ENCODE measurements at regions of chr6 and their contacts with region 1.

Region 1: GRCh38 chr6:3162565-3163247 is 5.4 kb upstream of the TUBB2A start:
- DNase-seq: peak; percentile 92 to 99 (median 98)
- ATAC-seq: peak; percentile 79
- H3K4me3 ChIP-seq: peak overlapping the region; percentile 69
- H3K27ac ChIP-seq: peak overlapping the region; percentile 98
- H3K4me1 ChIP-seq: peaks cover 33 to 76% of the 10 kb centered on the region in 2 experiments
- H3K27me3 ChIP-seq: no peaks in the 10 kb centered on the region
- CTCF ChIP-seq: peak; percentile 21 to 38 (median 22); a peak in 4 of 6 replicates
- EP300 ChIP-seq: no peak; the same call in 1 of the 2 replicates
- POLR2A ChIP-seq: peak; percentile 93
- RAD21 ChIP-seq: peak; percentile 25 to 31

Region 2: GRCh38 chr6:3068329-3069214 is 94.1 kb before region 1 on chr6 and contains the start of gene RIPK1:
- CTCF ChIA-PET with region 1: no interaction called
- POLR2A ChIA-PET with region 1: interaction called, 6 read pairs
- in situ Hi-C with region 1: no loop called
- intact Hi-C with region 1: loop called (anchors 2 kb)
- DNase-seq: peak; percentile 96 to 98 (median 96)
- ATAC-seq: peak; percentile 85
- H3K4me3 ChIP-seq: peak within 1 kb of the TSS; percentile 84
- H3K27ac ChIP-seq: peak within 1 kb of the TSS; percentile 97
- H3K4me1 ChIP-seq: peaks cover 19 to 30% of the 10 kb centered on the region in 2 experiments
- H3K27me3 ChIP-seq: no peaks in the 10 kb centered on the region
- CTCF ChIP-seq: peak; percentile 57 to 68 (median 59); a peak in 5 of 6 replicates
- EP300 ChIP-seq: peak; percentile 51
- POLR2A ChIP-seq: peak; percentile 95
- RAD21 ChIP-seq: peak in 1 of 2 experiments; percentile 34; a peak in 3 of 4 replicates
- polyA plus RNA-seq, gene RIPK1: 3.8 to 4.5 TPM

Region 3: DNA sequence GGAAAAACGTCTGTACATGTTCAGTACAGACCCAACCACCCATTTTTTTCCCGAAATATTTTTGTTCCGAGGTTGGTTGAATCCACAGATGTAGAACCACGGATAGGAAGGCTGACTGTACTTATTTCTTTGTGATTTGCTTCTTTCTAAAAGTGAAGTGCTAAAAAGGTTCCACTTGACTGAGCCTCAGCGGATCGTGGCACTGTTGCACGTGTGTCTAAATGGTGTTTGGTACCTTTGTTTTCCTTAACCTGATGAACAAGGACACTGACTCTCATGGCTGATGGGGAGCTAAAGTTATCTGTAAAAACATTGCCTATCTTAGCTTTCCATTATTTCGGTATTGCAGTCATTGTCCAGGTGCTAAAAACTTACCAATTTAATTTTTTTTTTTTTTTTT is 38.0 kb before region 1 on chr6:
- CTCF ChIA-PET with region 1: interaction called, 6 read pairs
- POLR2A ChIA-PET with region 1: interaction called, 4 read pairs
- in situ Hi-C with region 1: no loop called
- intact Hi-C with region 1: loop called (anchors 2 kb)
- DNase-seq: no peak
- ATAC-seq: no peak
- H3K4me3 ChIP-seq: no peak overlapping the region
- H3K27ac ChIP-seq: no peak overlapping the region
- H3K4me1 ChIP-seq: peaks cover 8 to 9% of the 10 kb centered on the region in 2 experiments; a peak in 4 of 5 replicates
- H3K27me3 ChIP-seq: no peaks in the 10 kb centered on the region
- CTCF ChIP-seq: no peak
- EP300 ChIP-seq: no peak
- POLR2A ChIP-seq: no peak
- RAD21 ChIP-seq: no peak

Region 4: DNA sequence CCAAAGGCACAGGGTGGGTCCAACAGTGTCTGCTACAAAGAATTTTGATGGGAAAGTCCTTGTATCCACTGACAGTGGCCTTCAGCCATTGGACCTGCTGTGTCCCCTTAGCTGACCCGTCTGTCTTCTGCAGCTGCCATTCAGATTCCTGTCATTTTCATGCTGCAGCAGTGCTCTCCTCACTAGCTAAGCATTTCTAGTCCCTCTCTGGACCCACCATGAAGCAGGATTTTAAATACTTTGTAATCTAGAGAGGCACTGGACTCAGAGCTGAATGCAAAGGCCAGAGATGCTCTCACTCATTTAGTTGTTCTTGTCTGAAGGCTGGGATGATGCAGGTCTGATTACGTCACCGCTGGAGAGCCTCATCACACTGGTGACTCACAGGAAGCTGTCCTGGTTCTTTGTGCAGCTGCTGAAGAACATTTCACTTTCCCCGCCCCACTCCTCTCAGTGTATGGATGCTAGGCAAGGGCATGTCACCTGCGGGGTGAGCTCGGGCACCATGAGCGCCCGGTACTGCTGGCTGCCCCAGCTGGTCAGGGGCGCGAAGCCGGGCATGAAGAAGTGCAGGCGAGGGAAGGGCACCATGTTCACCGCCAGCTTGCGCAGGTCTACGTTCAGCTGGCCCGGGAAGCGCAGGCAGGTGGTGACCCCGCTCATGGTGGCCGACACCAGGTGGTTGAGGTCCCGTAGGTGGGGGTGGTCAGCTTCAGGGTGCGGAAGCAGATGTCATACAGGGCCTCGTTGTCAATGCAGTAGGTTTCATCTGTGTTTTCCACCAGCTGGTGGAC is 14.1 kb after region 1 on chr6:
- CTCF ChIA-PET with region 1: interaction called, 4 read pairs
- POLR2A ChIA-PET with region 1: interaction called, 15 read pairs
- in situ Hi-C with region 1: no loop called
- intact Hi-C with region 1: no loop called
- DNase-seq: peak; percentile 76 to 91 (median 83)
- ATAC-seq: peak; percentile 94
- H3K4me3 ChIP-seq: no peak overlapping the region
- H3K27ac ChIP-seq: peak overlapping the region; percentile 31; the same call in 1 of the 3 replicates
- H3K4me1 ChIP-seq: peaks cover 34 to 46% of the 10 kb centered on the region in 2 experiments
- H3K27me3 ChIP-seq: peaks cover 0 to 4% of the 10 kb centered on the region in 2 experiments; a peak in 1 of 5 replicates
- CTCF ChIP-seq: 0 out of 6 replicates have a peak, but pooled peaks of 1 of the 3 experiments have one; percentile 3
- EP300 ChIP-seq: peak; percentile 66; the same call in 1 of the 2 replicates
- POLR2A ChIP-seq: no peak
- RAD21 ChIP-seq: no peak

Region 5: DNA sequence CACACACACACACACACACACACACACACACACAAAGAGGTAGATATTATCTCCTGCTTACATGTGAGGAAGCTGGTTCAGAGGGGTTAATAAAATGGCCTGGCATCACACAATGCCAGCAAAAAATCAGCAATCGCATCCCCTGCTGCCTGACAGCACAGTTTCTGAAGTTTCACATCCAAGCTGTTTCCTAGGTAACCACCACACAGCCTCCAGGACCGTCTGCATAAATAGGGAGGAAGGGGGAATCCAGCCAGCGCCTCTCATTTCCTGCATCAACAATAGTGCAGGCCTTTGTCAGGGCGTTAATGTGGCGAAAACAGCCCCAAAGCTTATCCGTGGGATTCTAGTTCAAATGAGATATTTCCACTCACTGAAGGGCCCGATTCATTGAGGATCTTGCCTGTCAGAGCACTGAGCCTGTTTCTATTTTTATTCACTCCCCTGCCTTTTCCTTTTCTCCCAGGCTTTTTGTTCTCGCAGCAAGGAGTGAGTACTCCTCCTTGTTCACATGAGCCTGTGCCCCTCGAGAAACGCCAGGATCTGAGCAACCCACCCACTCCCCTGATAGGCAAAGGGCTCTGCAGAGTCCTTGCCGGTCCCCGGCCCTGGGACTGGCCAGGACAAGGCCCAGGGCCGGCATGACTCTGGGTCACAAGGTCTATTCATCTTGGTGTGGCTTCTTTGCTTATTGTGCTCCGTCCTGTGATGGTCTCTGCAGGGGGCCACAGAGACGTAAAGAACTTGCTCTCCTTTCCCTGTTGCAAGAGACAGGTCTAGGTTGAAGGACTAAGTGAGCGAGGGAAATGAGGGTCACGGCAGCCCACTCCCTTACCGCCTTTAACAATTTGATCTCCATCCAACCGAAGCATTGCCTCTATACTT is 32.1 kb after region 1 on chr6:
- CTCF ChIA-PET with region 1: no interaction called
- POLR2A ChIA-PET with region 1: interaction called, 4 read pairs
- in situ Hi-C with region 1: no loop called
- intact Hi-C with region 1: loop called (anchors 2 kb)
- DNase-seq: peak in 1 of 4 experiments; percentile 29
- ATAC-seq: peak; percentile 69
- H3K4me3 ChIP-seq: peak overlapping the region; percentile 27
- H3K27ac ChIP-seq: peak overlapping the region; percentile 65
- H3K4me1 ChIP-seq: peaks cover 14 to 16% of the 10 kb centered on the region in 2 experiments; a peak in 4 of 5 replicates
- H3K27me3 ChIP-seq: no peaks in the 10 kb centered on the region
- CTCF ChIP-seq: no peak
- EP300 ChIP-seq: no peak
- POLR2A ChIP-seq: no peak
- RAD21 ChIP-seq: no peak

Region 6: DNA sequence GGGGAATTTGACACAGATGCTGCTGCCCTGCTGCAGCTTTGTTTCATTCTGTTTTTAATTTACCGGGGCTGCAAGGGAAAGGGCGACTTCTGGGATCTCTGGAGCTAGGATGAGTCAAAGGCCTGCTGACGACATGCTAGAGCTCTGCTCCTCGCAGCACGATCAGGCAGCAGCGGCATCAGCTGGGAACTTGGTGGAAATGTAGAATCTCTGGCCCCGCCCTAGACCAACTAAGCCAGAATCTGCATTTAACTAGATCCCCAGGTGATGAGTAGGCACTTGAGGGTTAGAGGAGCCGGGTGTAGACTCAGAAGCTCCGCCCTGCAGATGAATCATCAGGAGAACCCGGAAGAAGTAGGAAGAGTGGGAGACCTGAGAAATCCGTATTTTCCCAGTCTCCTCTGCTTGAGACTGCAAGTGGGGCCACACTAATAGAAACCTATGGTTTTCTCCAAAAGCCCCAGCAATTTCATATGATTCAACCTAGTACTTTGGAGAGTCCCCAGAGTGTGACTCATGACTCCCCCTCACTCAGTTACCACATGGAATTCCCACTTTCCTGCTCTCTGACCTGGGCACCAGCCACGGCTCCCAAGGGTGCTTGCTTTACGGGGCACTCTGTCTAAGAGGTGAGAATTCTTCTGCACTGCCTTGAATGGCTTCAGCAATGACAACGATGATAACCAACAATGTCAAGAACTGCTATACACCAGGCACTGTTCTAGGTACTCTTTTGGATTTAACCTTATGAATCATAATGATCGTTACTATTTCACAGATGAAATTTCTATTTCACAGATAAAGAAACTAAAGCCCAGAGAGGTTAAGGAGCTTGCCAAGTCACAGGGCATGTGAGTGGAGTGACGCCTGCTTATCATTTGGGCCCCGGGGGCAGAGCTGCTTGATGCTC is 46.7 kb after region 1 on chr6:
- CTCF ChIA-PET with region 1: no interaction called
- POLR2A ChIA-PET with region 1: interaction called, 15 read pairs
- in situ Hi-C with region 1: no loop called
- intact Hi-C with region 1: loop called (anchors 2 kb)
- DNase-seq: peak; percentile 93 to 97 (median 96)
- ATAC-seq: peak; percentile 98
- H3K4me3 ChIP-seq: no peak overlapping the region
- H3K27ac ChIP-seq: peak overlapping the region; percentile 75
- H3K4me1 ChIP-seq: peaks cover 33 to 44% of the 10 kb centered on the region in 2 experiments
- H3K27me3 ChIP-seq: no peaks in the 10 kb centered on the region
- CTCF ChIP-seq: peak; percentile 57 to 84 (median 82)
- EP300 ChIP-seq: peak; percentile 65
- POLR2A ChIP-seq: peak; percentile 47; the same call in 1 of the 2 replicates
- RAD21 ChIP-seq: peak; percentile 86 to 91

Region 7: GRCh38 chr6:3471286-3471685 is 308.6 kb after region 1 on chr6:
- CTCF ChIA-PET with region 1: no interaction called
- POLR2A ChIA-PET with region 1: no interaction called
- in situ Hi-C with region 1: no loop called
- intact Hi-C with region 1: no loop called
- DNase-seq: no peak
- ATAC-seq: no peak
- H3K4me3 ChIP-seq: no peak overlapping the region
- H3K27ac ChIP-seq: no peak overlapping the region
- H3K4me1 ChIP-seq: peaks cover 3 to 11% of the 10 kb centered on the region in 2 experiments; a peak in 3 of 5 replicates
- H3K27me3 ChIP-seq: peaks cover 0 to 2% of the 10 kb centered on the region in 2 experiments; a peak in 3 of 5 replicates
- CTCF ChIP-seq: no peak
- EP300 ChIP-seq: no peak
- POLR2A ChIP-seq: no peak
- RAD21 ChIP-seq: no peak

Region 8: DNA sequence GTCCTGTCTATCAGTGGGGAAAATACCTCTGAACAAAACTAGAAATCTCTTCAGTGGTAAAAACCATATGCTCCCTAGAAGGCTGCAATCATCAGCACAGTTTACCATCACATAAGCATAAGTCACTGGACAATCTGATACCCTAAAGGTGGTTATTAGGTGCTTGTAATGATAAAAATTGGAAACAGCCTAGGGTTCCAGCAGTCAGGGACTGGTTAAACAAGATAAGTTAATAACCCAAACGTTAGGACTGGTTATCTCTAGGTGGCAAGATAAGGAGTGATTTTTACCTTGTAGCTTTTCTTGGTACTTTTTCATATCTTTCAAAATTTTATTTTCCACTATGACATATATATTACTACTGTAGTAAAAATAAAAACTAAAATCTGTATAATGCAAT is 961.6 kb after region 1 on chr6:
- CTCF ChIA-PET with region 1: no interaction called
- POLR2A ChIA-PET with region 1: no interaction called
- in situ Hi-C with region 1: no loop called
- intact Hi-C with region 1: no loop called
- DNase-seq: peak in 3 of 4 experiments; percentile 22 to 44 (median 43)
- ATAC-seq: no peak
- H3K4me3 ChIP-seq: no peak overlapping the region
- H3K27ac ChIP-seq: no peak overlapping the region
- H3K4me1 ChIP-seq: peaks cover 0 to 33% of the 10 kb centered on the region in 2 experiments; a peak in 2 of 5 replicates
- H3K27me3 ChIP-seq: no peaks in the 10 kb centered on the region
- CTCF ChIP-seq: no peak
- EP300 ChIP-seq: no peak
- POLR2A ChIP-seq: no peak
- RAD21 ChIP-seq: no peak